ENCODE measurements at regions of chr3 and their contacts with region 1.

Region 1: DNA sequence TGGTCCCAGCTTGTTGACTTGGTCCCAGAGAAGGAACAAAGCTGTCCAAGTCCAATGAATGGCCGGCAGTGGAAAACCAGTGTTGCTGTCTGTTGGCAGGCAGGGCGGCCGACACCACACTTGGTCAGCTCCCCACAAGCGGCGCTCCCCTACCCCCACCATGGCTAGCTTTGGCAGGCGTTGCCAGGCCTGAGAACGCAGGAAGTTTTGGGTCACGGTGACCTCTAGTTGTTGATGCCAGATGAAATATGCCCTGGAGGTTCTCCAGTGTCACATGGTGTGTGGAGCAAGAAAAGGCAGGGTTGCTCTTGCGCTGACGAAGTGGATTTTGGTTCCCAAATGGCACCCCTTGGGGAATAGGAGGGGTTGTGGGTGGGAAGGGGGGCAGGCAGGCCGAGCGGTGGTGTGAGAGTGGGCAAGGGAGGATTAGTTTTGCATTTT is 72.7 kb upstream of the TPRG1 start:
- DNase-seq: peak; percentile 93
- ATAC-seq: peak; percentile 93

Region 2: GRCh38 chr3:188842639-188843038 is 256.4 kb before region 1 on chr3:
- intact Hi-C with region 1: no loop called
- DNase-seq: no peak
- ATAC-seq: no peak

Region 3: DNA sequence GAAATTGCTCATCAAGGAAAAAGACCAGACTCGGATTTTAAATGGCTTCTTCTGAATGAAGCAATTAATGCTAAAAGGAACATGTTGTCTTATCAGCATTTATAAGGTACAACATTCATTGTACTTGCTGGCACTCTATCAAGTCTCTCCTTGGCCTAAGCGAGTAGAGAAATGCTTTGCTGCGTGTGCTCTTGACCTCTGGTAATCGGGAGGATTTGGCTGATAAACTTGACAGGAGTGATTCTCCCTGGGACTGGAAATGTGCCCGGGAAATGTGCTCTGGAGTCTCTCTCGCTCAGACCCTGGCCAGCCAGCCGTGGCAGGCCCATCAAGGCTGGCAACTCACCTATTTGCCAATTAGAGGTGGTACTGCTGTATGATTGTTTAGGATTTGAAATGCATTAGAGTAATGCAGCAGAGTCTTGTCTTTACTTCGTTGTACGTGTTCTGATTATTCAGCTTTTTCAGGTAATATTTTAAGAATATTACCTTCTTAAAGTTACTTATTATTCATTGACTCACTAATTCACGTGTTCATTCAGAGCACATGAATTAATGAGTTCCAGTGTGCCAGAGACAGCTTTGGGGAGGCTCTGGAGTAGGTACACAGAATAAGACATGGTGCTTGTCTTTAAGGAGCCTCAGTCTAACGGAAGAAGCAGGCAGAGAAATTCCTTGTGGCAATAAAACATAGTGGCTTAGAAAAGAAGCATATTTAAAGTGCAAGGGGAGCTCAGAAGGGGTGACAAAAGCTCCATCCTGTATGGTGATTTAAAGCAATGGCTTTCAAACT is 24.7 kb after region 1 on chr3:
- intact Hi-C with region 1: loop called (anchors 2 kb)
- DNase-seq: no peak
- ATAC-seq: peak; percentile 90